A549 (cell line): ENCODE measurements at regions of chr22 and their contacts with region 1.

Region 1: GRCh38 chr22:50326959-50327710 is at the start of gene DENND6B:
- DNase-seq: peak; percentile 49 to 71
- ATAC-seq: peak; percentile 90 to 93
- H3K4me3 ChIP-seq: peak within 1 kb of the TSS; percentile 92
- H3K27ac ChIP-seq: peak within 1 kb of the TSS; percentile 97
- H3K4me1 ChIP-seq: peaks cover 17% of the 10 kb centered on the region; the same call in 2 of the 3 replicates
- CTCF ChIP-seq: peak; percentile 84
- EP300 ChIP-seq: no peak
- POLR2A ChIP-seq: peak; percentile 38
- RAD21 ChIP-seq: peak in 1 of 2 experiments; percentile 62; a peak in 3 of 5 replicates
- polyA plus RNA-seq, gene DENND6B: 1.6 and 1.7 TPM in 2 replicates

Region 2: DNA sequence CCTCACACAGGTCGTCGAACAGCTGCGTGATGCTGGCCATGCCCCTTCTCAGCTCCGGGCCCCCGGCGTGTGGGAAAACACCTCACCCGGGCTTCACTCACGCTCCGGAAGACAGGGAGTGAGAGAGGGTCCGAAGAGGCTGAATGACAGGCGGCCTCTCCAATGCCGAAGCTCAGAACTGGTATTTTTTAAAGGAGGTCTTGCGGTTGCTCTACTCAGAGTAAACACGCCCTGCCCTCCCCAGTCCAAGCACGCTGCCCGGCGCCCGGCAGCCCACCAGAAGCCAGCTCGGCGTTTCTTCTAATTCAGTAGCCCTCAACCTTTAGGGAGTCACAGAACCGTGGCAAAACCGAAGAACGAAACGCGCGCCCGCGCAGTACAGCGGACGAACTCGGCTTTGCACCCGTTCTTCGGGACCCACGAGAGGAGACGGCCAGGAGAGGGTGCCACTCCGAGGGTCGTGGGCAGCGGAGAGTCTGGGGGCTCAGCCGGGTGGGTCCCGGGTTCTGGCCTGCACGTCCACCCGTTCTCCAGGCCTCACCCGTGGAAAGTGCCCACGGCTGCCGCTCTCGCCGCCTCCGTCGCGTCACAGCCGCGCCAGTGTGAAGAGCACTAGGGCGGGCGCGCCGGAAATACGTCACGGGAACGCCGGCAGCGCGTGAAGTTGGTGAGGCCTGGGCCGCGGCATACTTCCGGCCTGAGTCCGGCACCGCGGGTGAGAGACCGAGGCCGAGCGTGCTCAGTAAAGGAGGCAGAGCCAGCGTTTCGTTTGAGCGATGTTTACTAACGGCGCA is 82.5 kb before region 1 on chr22 and contains the start of gene TUBGCP6:
- CTCF ChIA-PET with region 1: interaction called, 74 read pairs
- POLR2A ChIA-PET with region 1: no interaction called
- DNase-seq: peak; percentile 78 to 91
- ATAC-seq: peak; percentile 75 to 85
- H3K4me3 ChIP-seq: peak within 1 kb of the TSS; percentile 97
- H3K27ac ChIP-seq: peak within 1 kb of the TSS; percentile 88 to 96
- H3K4me1 ChIP-seq: peaks cover 21% of the 10 kb centered on the region; the same call in 2 of the 3 replicates
- CTCF ChIP-seq: no peak
- EP300 ChIP-seq: no peak
- POLR2A ChIP-seq: peak; percentile 56
- RAD21 ChIP-seq: no peak
- polyA plus RNA-seq, gene TUBGCP6: 6.5 and 7.2 TPM in 2 replicates

Region 3: DNA sequence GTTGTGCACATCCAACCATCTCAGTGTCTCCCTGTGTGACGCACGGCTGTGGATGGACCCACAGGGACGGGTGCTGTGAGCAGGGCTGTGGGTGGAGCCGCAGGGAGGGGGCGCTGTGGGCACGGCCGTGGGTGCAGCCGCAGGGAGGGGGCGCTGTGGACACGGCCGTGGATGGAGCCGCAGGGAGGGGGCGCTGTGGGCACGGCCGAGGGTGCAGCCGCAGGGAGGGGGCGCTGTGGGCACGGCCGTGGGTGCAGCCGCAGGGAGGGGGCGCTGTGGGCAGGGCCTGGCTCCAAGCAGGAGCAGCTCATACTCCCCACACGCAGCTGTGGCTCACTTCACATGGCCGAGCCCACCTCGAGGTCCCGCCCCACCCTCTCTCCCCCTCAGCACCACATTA is 51.0 kb before region 1 on chr22:
- CTCF ChIA-PET with region 1: interaction called, 14 read pairs
- POLR2A ChIA-PET with region 1: no interaction called
- DNase-seq: peak in 1 of 2 experiments; percentile 76
- ATAC-seq: peak; percentile 23 to 47
- H3K4me3 ChIP-seq: no peak overlapping the region
- H3K27ac ChIP-seq: no peak overlapping the region
- H3K4me1 ChIP-seq: peaks cover 15% of the 10 kb centered on the region
- CTCF ChIP-seq: peak; percentile 60
- EP300 ChIP-seq: no peak
- POLR2A ChIP-seq: no peak
- RAD21 ChIP-seq: no peak

Region 4: GRCh38 chr22:50306753-50307749 is 20.1 kb before region 1 on chr22 and contains the start of gene PLXNB2:
- CTCF ChIA-PET with region 1: interaction called, 33 read pairs
- POLR2A ChIA-PET with region 1: interaction called, 5 read pairs
- DNase-seq: peak; percentile 40 to 77
- ATAC-seq: no peak
- H3K4me3 ChIP-seq: peak within 1 kb of the TSS; percentile 100
- H3K27ac ChIP-seq: peak within 1 kb of the TSS; percentile 98 to 100
- H3K4me1 ChIP-seq: peaks cover 48% of the 10 kb centered on the region
- CTCF ChIP-seq: no peak
- EP300 ChIP-seq: no peak
- POLR2A ChIP-seq: peak; percentile 53
- RAD21 ChIP-seq: no peak
- polyA plus RNA-seq, gene PLXNB2: 24.6 and 32.4 TPM in 2 replicates

Region 5: GRCh38 chr22:50341977-50342650 is 15.0 kb after region 1 on chr22:
- CTCF ChIA-PET with region 1: interaction called, 36 read pairs
- POLR2A ChIA-PET with region 1: interaction called, 3 read pairs
- DNase-seq: peak; percentile 35 to 83
- ATAC-seq: peak; percentile 79 to 89
- H3K4me3 ChIP-seq: peak overlapping the region; percentile 88
- H3K27ac ChIP-seq: peak overlapping the region; percentile 74 to 100
- H3K4me1 ChIP-seq: no peaks in the 10 kb centered on the region
- CTCF ChIP-seq: peak; percentile 87
- EP300 ChIP-seq: no peak
- POLR2A ChIP-seq: no peak
- RAD21 ChIP-seq: peak; percentile 81 to 86

Region 6: GRCh38 chr22:50717709-50718351 is 390.7 kb after region 1 on chr22:
- CTCF ChIA-PET with region 1: no interaction called
- POLR2A ChIA-PET with region 1: no interaction called
- DNase-seq: no peak
- ATAC-seq: no peak; a peak in 1 of 6 replicates
- H3K4me3 ChIP-seq: no peak overlapping the region
- H3K27ac ChIP-seq: no peak overlapping the region
- H3K4me1 ChIP-seq: no peaks in the 10 kb centered on the region
- CTCF ChIP-seq: no peak
- EP300 ChIP-seq: no peak
- POLR2A ChIP-seq: no peak
- RAD21 ChIP-seq: no peak